ENCODE measurements at regions of chr7 and their contacts with region 1.

Region 1: GRCh38 chr7:38369816-38370493 is 96.5 kb upstream of the TARP start:
- DNase-seq: peak; percentile 67 to 88 (median 75)
- H3K4me3 ChIP-seq: no peak overlapping the region
- H3K4me3 Mint-ChIP-seq: peak overlapping the region; percentile 66 to 87 (median 73)
- H3K27ac ChIP-seq: no peak overlapping the region
- H3K27ac Mint-ChIP-seq: peak overlapping the region; percentile 79 to 98 (median 95)
- H3K4me1 ChIP-seq: peaks cover 62% of the 10 kb centered on the region
- H3K4me1 Mint-ChIP-seq: peaks cover 74 to 90% (median 86%) of the 10 kb centered on the region in 3 donors
- H3K27me3 ChIP-seq: no peaks in the 10 kb centered on the region
- H3K27me3 Mint-ChIP-seq: peaks cover 0 to 1% of the 10 kb centered on the region in 2 donors

Region 2: DNA sequence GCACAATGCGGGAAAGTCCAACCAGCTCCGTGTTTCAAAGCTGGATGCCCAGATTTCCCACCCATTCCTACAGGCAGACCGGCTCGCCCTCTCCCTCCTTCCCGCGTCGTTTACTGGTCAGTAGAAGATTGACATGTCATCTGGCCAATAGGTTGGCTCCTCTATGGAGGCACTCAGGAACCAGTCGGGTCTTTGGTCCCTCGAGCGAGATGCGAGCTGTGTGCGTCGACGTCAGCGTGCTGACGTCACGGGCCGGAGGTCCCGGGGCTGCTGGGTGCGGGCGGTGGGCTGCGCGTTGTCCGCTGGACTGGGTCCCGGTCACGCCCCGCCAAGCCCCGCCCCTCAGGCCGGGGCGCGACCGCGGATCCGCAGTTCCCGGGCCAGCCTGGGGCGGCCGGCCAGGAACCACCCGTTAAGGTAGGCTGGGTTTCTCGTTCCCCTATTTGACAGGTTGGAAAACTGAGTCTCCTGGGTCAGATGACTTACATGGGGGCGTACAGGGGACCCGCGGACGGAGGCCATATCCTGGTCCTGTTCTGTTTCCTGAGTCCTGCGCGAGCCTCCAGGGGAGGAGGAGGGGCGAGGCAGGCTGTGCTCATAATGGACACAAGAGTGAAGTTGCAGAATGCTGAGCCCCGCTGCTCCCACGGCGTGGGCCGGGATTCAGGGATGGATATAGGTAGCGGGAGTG is 191.8 kb before region 1 on chr7 and contains the start of gene STARD3NL:
- CTCF ChIA-PET with region 1: interaction called, 13 read pairs
- POLR2A ChIA-PET with region 1: no interaction called
- DNase-seq: peak; percentile 82 to 95 (median 91)
- H3K4me3 ChIP-seq: peak within 1 kb of the TSS; percentile 95
- H3K4me3 Mint-ChIP-seq: peak within 1 kb of the TSS; percentile 96 to 100 (median 98)
- H3K27ac ChIP-seq: peak within 1 kb of the TSS; percentile 80
- H3K27ac Mint-ChIP-seq: peak within 1 kb of the TSS; percentile 95 to 99 (median 96)
- H3K4me1 ChIP-seq: peaks cover 29% of the 10 kb centered on the region
- H3K4me1 Mint-ChIP-seq: peaks cover 41 to 51% (median 47%) of the 10 kb centered on the region in 3 donors
- H3K27me3 ChIP-seq: no peaks in the 10 kb centered on the region
- H3K27me3 Mint-ChIP-seq: peaks cover 6 to 10% of the 10 kb centered on the region in 2 donors
- total RNA-seq, gene STARD3NL: 41.5 to 43.8 TPM

Region 3: GRCh38 chr7:38222481-38223096 is 147.4 kb before region 1 on chr7:
- CTCF ChIA-PET with region 1: interaction called, 394 read pairs
- POLR2A ChIA-PET with region 1: interaction called, 34 read pairs
- DNase-seq: peak in 2 of 5 donors; percentile 58 to 60
- H3K4me3 ChIP-seq: no peak overlapping the region
- H3K4me3 Mint-ChIP-seq: peak overlapping the region in 6 of 7 donors; percentile 3 to 73 (median 21)
- H3K27ac ChIP-seq: no peak overlapping the region
- H3K27ac Mint-ChIP-seq: peak overlapping the region; percentile 54 to 98 (median 92)
- H3K4me1 ChIP-seq: peaks cover 60% of the 10 kb centered on the region
- H3K4me1 Mint-ChIP-seq: peaks cover 88 to 100% (median 99%) of the 10 kb centered on the region in 3 donors
- H3K27me3 ChIP-seq: no peaks in the 10 kb centered on the region
- H3K27me3 Mint-ChIP-seq: no peaks in the 10 kb centered on the region

Region 4: DNA sequence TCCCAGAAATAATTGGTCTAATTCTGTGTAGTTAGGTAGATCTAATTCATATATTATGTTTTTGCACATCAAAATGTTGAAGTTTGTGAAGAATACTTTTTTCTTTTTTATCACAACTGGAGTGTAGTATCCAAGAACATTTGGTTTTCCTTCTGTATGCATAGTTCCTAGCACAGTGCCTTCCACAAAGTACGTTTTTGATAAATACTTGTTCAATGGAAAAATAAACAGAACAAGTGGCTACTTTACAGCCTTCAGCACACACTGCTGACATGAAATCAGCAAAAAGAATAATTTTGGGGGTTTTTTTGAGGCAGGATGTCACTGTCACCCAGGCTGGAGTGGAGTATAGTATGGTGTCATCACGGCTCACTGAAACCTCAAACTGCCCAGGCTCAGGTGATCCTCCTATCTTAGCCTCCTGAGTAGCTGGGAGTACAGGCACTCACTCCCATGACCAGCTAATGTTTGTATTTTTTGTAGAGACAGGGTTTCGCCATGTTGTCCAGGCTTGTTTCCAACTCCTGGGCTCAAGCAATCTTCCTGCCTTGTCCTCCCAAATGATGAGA is 124.5 kb before region 1 on chr7:
- CTCF ChIA-PET with region 1: interaction called, 4 read pairs
- POLR2A ChIA-PET with region 1: interaction called, 11 read pairs
- DNase-seq: peak in 2 of 5 donors; percentile 45 to 53
- H3K4me3 ChIP-seq: no peak overlapping the region
- H3K4me3 Mint-ChIP-seq: peak overlapping the region; percentile 46 to 98 (median 79)
- H3K27ac ChIP-seq: peak overlapping the region; percentile 44
- H3K27ac Mint-ChIP-seq: peak overlapping the region; percentile 90 to 99 (median 96)
- H3K4me1 ChIP-seq: peaks cover 35% of the 10 kb centered on the region
- H3K4me1 Mint-ChIP-seq: peaks cover 78 to 84% (median 84%) of the 10 kb centered on the region in 3 donors
- H3K27me3 ChIP-seq: no peaks in the 10 kb centered on the region
- H3K27me3 Mint-ChIP-seq: peaks cover 0 to 2% of the 10 kb centered on the region in 2 donors

Region 5: GRCh38 chr7:38382684-38383083 is 12.7 kb after region 1 on chr7:
- CTCF ChIA-PET with region 1: interaction called, 92 read pairs
- POLR2A ChIA-PET with region 1: no interaction called
- DNase-seq: no peak
- H3K4me3 ChIP-seq: no peak overlapping the region
- H3K4me3 Mint-ChIP-seq: no peak overlapping the region
- H3K27ac ChIP-seq: no peak overlapping the region
- H3K27ac Mint-ChIP-seq: peak overlapping the region in 1 of 8 donors; percentile 42
- H3K4me1 ChIP-seq: no peaks in the 10 kb centered on the region
- H3K4me1 Mint-ChIP-seq: peaks cover 13 to 27% (median 24%) of the 10 kb centered on the region in 3 donors
- H3K27me3 ChIP-seq: no peaks in the 10 kb centered on the region
- H3K27me3 Mint-ChIP-seq: no peaks in the 10 kb centered on the region